PC-3 (cell line): ENCODE measurements at regions of chr3 and their contacts with region 1.

Region 1: GRCh38 chr3:186084264-186084663 is 24.6 kb downstream of the ETV5 start:
- DNase-seq: no peak
- ATAC-seq: no peak
- H3K4me3 ChIP-seq: no peak overlapping the region
- H3K27ac ChIP-seq: no peak overlapping the region
- H3K4me1 ChIP-seq: no peaks in the 10 kb centered on the region
- H3K27me3 ChIP-seq: no peaks in the 10 kb centered on the region
- CTCF ChIP-seq: no peak

Region 2: DNA sequence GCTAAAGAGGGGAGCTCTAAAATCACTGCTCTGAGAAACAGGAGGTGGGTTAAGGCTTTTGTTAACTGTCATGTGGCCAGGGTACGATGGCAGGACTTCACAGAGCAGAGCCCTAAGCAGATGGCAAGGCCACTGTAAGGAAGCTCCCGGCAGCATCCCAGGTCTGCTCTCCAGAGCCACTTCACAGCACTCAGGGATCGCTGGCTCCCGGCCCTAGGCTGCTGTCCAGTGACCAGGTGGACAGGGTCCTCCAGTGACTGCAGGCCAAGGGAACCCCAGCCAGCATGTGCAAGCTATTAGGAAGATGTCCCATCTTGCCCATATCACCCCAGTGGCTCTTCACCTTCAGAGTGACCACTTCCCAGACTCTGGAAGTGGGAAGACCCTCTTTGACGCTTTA is 595.8 kb before region 1 on chr3:
- CTCF ChIA-PET with region 1: no interaction called
- POLR2A ChIA-PET with region 1: interaction called, 11 read pairs
- intact Hi-C with region 1: no loop called
- DNase-seq: no peak
- ATAC-seq: no peak
- H3K4me3 ChIP-seq: no peak overlapping the region
- H3K27ac ChIP-seq: no peak overlapping the region
- H3K4me1 ChIP-seq: no peaks in the 10 kb centered on the region
- H3K27me3 ChIP-seq: no peaks in the 10 kb centered on the region
- CTCF ChIP-seq: no peak

Region 3: GRCh38 chr3:186053954-186054791 is 30.1 kb before region 1 on chr3:
- CTCF ChIA-PET with region 1: no interaction called
- POLR2A ChIA-PET with region 1: no interaction called
- intact Hi-C with region 1: no loop called
- DNase-seq: no peak
- ATAC-seq: no peak
- H3K4me3 ChIP-seq: no peak overlapping the region
- H3K27ac ChIP-seq: no peak overlapping the region
- H3K4me1 ChIP-seq: no peaks in the 10 kb centered on the region
- H3K27me3 ChIP-seq: no peaks in the 10 kb centered on the region
- CTCF ChIP-seq: no peak

Region 4: GRCh38 chr3:186496016-186496415 is 411.8 kb after region 1 on chr3:
- CTCF ChIA-PET with region 1: no interaction called
- POLR2A ChIA-PET with region 1: interaction called, 13 read pairs
- intact Hi-C with region 1: no loop called
- DNase-seq: no peak
- ATAC-seq: no peak
- H3K4me3 ChIP-seq: no peak overlapping the region
- H3K27ac ChIP-seq: no peak overlapping the region
- H3K4me1 ChIP-seq: no peaks in the 10 kb centered on the region
- H3K27me3 ChIP-seq: peaks cover 26% of the 10 kb centered on the region
- CTCF ChIP-seq: no peak